Calu3 (cell line): ENCODE measurements at regions of chr16 and their contacts with region 1.

Region 1: GRCh38 chr16:74431516-74431915 is 10.2 kb upstream of the CLEC18B start:
- DNase-seq: no peak
- H3K4me3 Mint-ChIP-seq: no peak overlapping the region
- H3K27ac Mint-ChIP-seq: no peak overlapping the region
- H3K4me1 Mint-ChIP-seq: no peaks in the 10 kb centered on the region
- H3K27me3 Mint-ChIP-seq: no peaks in the 10 kb centered on the region
- CTCF ChIP-seq: no peak

Region 2: DNA sequence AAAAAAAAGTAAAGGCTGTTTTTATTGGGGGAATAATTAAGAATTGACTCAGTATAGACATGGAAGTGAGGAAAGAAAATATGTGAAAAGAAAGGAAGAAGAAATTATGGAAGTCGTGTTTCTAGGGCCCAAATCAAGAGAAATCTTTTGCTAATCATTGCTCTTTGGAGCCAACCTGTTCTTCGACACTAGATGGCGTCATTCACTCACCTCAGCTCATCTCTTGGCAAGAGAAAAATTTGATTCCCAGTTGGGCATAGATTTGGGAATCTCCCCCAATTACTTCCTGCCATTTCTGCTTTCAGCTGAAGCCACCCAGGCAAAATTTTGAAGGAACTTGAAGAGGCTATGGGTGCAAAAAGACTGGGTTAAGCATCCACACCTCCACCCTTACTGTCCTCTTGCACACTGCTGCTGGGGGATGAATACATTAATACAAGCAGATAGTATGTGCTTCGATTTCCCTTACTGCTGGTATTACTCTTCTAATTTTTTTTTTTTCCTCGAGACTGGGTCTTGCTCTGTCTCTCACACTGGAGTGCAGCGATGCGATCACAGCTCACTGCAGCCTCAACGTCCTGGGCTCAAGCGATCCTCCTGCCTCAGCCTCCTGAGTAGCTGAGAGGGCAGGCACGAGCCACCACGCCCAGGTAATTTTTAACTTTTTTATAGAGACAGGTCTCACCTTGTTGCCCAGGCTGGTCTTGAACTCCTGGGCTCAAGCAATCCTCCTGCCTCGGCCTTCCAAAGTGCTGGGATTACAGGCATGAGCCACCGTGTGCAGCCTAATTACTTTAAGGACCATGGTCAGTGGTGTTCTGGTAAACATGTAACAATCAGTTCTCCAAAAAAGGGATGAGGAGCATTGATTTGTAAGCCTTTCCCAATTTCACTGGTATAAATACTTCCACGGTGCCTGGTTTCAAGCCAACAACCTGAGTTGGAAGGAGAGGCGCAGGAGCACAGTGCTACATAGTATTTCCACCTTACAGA is 121.4 kb before region 1 on chr16:
- CTCF ChIA-PET with region 1: no interaction called
- intact Hi-C with region 1: loop called (anchors 2 kb)
- DNase-seq: peak; percentile 38
- H3K4me3 Mint-ChIP-seq: no peak overlapping the region
- H3K27ac Mint-ChIP-seq: no peak overlapping the region
- H3K4me1 Mint-ChIP-seq: no peaks in the 10 kb centered on the region
- H3K27me3 Mint-ChIP-seq: no peaks in the 10 kb centered on the region
- CTCF ChIP-seq: peak; percentile 67